GM12878 (cell line): ENCODE measurements at regions of chr22 and their contacts with region 1.

Region 1: DNA sequence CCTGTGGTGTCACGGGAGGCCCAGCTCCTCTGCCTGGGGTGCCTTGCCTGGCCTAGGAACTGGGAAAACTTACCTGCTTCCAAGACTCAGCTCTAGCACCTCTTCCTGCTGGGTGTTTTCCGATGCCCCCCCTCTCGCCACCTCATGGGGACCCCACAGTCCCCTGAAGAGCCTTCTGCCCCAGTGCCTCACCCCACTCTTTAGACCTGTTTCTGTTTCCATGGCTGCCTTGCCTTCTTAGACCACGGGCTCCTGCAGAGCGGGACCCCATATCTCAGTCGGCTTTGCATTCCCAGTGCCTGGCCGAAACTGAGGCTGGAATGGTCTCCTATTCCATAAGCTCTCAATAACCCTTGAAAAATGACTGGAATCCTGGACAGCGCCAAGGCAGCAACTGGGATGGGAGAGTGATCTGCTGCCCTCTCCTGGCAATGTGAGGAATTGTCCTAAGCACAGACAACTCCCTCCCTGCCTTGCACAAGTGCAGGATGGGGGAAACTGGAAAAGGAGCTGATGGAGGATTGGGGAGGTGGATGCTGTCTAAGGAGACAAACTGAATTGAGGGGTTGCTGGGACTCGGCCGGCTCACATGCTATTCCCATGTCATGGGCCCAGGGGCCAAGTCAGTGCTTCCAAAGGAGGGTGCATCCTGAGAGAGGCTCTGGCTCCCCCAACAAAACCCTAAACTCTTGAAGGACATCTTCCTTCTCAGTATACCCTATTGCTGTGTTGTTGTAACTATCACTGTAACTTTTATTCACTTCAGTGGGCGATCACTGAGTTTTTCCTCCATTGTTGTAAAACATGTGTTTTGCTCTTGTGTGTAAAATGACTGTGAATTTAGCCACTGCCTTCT is 26.6 kb upstream of the IL17RA start:
- DNase-seq: no peak
- ATAC-seq: peak; percentile 90
- H3K4me3 ChIP-seq: no peak overlapping the region
- H3K27ac ChIP-seq: no peak overlapping the region
- H3K4me1 ChIP-seq: no peaks in the 10 kb centered on the region
- H3K27me3 ChIP-seq: no peaks in the 10 kb centered on the region
- CTCF ChIP-seq: peak; percentile 93 to 96 (median 94); a peak in 5 of 6 replicates
- EP300 ChIP-seq: no peak
- POLR2A ChIP-seq: peak; percentile 22; the same call in 1 of the 2 replicates
- RAD21 ChIP-seq: peak; percentile 77

Region 2: DNA sequence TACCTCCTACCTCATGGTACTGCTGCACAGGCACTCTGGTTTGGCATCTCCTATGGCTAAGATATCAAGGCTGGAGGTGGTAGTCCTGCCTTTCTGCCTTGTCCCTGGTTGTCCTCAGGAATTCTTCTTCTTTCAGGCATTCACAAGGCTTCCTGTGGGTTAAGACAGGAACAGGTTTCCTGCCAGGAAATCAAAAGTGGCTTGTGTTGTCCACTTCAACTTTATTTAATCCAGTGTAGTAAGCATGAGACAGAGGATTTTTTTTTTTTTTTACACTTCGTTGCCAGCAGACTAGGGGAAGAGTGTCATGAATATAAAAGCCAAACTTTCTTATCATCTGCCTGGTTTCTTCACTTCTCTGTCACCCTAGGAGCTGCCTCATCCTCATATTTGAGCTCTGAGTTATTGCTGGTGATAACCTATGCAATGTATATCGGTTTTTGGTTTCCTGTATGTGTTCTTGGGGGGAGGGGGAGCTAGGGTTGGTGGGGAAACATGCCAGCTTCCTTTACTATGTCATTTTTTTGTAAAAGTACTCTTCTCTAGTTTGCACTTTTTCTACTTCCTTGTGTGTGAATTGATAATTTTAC is 283.2 kb before region 1 on chr22:
- CTCF ChIA-PET with region 1: no interaction called
- POLR2A ChIA-PET with region 1: no interaction called
- RAD21 ChIA-PET with region 1: no interaction called
- SMC1A ChIA-PET with region 1: no interaction called
- in situ Hi-C with region 1: no loop called
- intact Hi-C with region 1: loop called (anchors 10 kb)
- DNase-seq: no peak
- ATAC-seq: no peak
- H3K4me3 ChIP-seq: no peak overlapping the region
- H3K27ac ChIP-seq: no peak overlapping the region
- H3K4me1 ChIP-seq: no peaks in the 10 kb centered on the region
- H3K27me3 ChIP-seq: no peaks in the 10 kb centered on the region
- CTCF ChIP-seq: no peak
- EP300 ChIP-seq: no peak
- POLR2A ChIP-seq: no peak
- RAD21 ChIP-seq: no peak

Region 3: DNA sequence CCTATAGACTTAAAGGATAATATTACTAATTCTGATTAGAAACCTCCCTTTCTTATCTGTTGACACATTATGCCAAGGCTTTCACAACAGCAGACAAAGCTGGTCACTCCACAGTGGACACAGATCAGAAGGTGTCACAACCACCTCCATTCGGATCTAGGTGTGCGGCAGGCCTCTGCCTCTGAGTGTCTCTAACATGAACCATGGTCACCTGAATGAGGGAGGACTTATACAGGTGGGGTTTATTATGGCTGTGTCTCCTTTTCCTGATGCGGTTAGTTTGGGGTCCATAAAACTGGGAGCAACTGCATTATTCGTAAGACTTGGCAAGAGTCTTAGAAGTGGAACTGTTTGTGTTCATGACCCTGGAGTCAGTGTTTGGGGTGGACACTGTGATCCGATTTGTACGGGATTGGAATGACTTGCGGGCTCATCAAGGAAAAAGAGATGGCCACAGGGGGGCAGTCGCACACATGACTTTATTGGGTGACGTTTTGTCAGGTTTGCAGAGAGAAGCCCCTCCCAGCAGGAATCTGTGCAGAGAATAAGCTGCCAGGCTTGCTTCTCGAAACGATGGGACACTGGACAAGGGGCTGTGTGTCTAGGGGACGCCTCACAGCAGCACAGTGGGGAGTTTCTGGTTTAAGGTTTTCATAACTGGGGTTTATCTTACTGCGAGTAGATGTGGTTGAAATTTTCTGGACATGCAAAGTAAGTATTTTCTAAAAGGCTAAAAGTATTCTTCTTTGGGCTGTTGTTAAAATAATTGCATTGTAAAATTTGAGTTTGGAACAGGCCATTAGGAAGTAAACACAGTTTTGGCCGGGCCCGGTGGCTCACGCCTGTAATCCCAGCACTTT is 140.8 kb before region 1 on chr22:
- CTCF ChIA-PET with region 1: interaction called, 63 read pairs
- POLR2A ChIA-PET with region 1: interaction called, 3 read pairs
- RAD21 ChIA-PET with region 1: interaction called, 24 read pairs
- SMC1A ChIA-PET with region 1: interaction called, 30 read pairs
- in situ Hi-C with region 1: loop called (anchors 5 kb)
- intact Hi-C with region 1: loop called (anchors 1 kb)
- DNase-seq: peak; percentile 12
- ATAC-seq: peak; percentile 92
- H3K4me3 ChIP-seq: no peak overlapping the region
- H3K27ac ChIP-seq: no peak overlapping the region
- H3K4me1 ChIP-seq: no peaks in the 10 kb centered on the region; the same call in 1 of the 2 replicates
- H3K27me3 ChIP-seq: no peaks in the 10 kb centered on the region
- CTCF ChIP-seq: peak; percentile 69 to 77 (median 75)
- EP300 ChIP-seq: no peak
- POLR2A ChIP-seq: no peak
- RAD21 ChIP-seq: peak; percentile 69

Region 4: DNA sequence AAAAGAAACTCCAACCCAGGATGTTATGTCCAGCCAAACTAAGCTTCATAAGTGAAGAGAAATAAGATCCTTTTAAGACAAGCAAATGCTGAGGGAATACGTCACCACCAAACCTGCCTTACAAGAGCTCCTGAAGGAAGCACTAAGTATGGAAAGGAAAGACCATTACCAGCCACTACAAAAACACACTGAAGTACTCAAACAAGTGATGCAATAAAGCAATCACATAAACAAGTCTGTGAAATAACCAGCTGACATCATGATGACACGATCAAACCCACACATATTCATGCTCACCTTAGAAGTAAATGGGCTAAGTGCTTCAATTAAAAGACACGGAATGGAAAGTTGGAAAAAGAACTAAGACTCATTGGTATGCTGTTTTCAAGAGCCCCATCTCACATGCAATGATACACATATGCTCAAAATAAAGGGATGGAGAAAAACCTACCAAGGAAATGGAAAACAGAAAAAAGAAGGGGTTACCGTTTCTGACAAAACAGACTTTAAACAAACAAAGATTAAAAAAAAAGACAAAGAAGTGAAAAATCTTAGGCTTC is 132.7 kb before region 1 on chr22:
- CTCF ChIA-PET with region 1: interaction called, 15 read pairs
- POLR2A ChIA-PET with region 1: no interaction called
- RAD21 ChIA-PET with region 1: no interaction called
- SMC1A ChIA-PET with region 1: interaction called, 3 read pairs
- in situ Hi-C with region 1: no loop called
- intact Hi-C with region 1: no loop called
- DNase-seq: no peak
- ATAC-seq: no peak
- H3K4me3 ChIP-seq: no peak overlapping the region
- H3K27ac ChIP-seq: no peak overlapping the region
- H3K4me1 ChIP-seq: no peaks in the 10 kb centered on the region
- H3K27me3 ChIP-seq: no peaks in the 10 kb centered on the region; a peak in 1 of 4 replicates
- CTCF ChIP-seq: no peak
- EP300 ChIP-seq: no peak
- POLR2A ChIP-seq: no peak
- RAD21 ChIP-seq: no peak

Region 5: GRCh38 chr22:17083811-17084441 is 25.7 kb after region 1 on chr22:
- CTCF ChIA-PET with region 1: no interaction called
- POLR2A ChIA-PET with region 1: no interaction called
- RAD21 ChIA-PET with region 1: no interaction called
- SMC1A ChIA-PET with region 1: no interaction called
- in situ Hi-C with region 1: no loop called
- intact Hi-C with region 1: no loop called
- DNase-seq: no peak
- ATAC-seq: no peak
- H3K4me3 ChIP-seq: no peak overlapping the region
- H3K27ac ChIP-seq: no peak overlapping the region
- H3K4me1 ChIP-seq: peaks cover 19% of the 10 kb centered on the region
- H3K27me3 ChIP-seq: no peaks in the 10 kb centered on the region
- CTCF ChIP-seq: no peak
- EP300 ChIP-seq: no peak
- POLR2A ChIP-seq: no peak
- RAD21 ChIP-seq: no peak

Region 6: DNA sequence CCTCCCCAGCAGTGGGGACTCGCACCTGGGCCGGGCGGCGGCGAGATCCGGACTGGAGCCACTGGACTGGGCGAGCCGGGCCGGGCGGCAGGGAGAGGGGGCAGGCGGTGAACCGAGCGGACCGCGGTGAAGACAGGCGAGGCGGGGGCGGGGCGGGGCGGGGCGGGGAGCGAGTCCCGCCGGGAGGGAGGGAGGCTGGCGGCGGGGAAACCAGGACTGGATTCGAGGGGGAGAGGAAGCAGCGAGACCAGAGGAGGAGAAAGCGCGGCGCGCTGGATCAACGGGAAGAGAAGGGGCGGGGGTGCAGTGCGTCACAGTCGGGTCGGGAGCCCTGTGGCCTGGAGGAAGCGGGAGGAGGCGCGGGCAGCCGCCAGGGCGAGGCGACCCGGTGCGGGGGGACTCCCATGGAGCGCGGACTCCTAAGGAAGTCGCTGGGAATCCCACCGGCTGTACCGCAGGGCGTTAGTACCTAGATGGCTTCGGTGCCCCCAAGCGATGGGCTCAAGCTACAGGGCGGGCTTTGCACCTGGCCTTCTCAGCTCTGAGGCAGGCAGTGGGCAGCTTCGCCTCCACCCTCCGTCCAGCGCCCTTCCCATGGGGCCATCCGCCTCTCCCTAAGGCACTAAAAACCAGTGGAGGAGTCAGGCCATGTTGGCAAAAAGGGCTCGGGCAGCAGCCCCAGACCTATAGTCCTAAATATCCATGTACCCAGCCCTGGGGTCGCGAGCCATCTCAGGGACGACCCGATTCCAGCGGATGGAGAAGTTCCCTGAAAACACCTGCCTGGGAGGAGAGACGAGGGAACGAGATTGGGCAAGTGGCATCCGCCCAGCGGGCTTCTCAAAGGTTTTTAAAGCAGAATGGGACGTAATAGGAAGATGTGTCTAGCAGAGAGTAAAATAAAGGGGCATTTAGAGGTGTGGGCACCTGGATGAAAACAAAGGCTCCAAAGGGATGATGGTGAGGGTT is 63.3 kb after region 1 on chr22 and contains the start of gene TMEM121B:
- CTCF ChIA-PET with region 1: no interaction called
- POLR2A ChIA-PET with region 1: no interaction called
- RAD21 ChIA-PET with region 1: no interaction called
- SMC1A ChIA-PET with region 1: no interaction called
- in situ Hi-C with region 1: no loop called
- intact Hi-C with region 1: no loop called
- DNase-seq: no peak
- ATAC-seq: peak; percentile 17; the same call in 2 of the 3 replicates
- H3K4me3 ChIP-seq: peak within 1 kb of the TSS; percentile 27; the same call in 1 of the 2 replicates
- H3K27ac ChIP-seq: no peak within 1 kb of the TSS
- H3K4me1 ChIP-seq: peaks cover 18% of the 10 kb centered on the region
- H3K27me3 ChIP-seq: peaks cover 4 to 10% of the 10 kb centered on the region in 2 experiments
- CTCF ChIP-seq: no peak
- EP300 ChIP-seq: no peak
- POLR2A ChIP-seq: no peak
- RAD21 ChIP-seq: no peak
- polyA plus RNA-seq, gene TMEM121B: 0.02 TPM in 1 of 2 experiments, not detected in the other